Sigmoid colon (tissue), 7 donors: ENCODE measurements at regions of chr13 and their contacts with region 1.

Region 1: DNA sequence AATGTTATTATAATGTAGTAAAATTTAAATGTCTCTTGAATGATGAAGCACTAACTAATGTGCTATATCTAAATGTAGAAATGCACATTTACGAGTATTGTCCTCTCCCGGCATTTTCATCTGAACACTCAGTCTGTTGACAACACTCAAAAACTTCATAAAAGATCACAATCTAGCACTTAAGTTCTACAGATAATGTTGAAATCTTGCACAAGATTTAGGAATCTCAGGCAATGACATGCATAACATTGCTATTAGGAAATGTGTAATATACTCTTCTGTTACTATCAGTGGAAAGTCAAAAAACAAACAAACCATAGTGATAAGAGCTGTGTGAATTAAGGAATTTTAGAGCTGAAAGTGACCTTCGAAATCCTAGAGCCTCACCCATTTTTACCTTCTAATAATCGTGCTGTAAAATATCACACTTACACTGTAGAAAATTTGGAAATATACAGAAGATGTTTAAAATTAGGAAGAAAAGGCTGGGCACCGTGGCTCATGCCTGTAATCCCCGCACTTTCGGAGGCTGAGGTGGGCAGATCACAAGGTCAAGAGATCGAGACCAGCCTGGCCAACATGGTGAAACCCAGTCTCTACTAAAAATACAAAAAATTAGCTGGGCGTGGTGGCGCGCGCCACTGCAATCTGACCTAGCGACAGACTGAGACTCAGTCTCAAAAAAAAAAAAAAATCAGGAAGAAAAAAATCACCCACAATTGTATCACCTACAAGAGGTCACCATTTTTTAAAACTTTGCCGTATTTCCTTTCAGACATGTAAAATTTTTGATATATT is 37.7 kb upstream of the XPO4 start:
- DNase-seq: no peak
- H3K4me3 ChIP-seq: no peak overlapping the region
- H3K27ac ChIP-seq: peak overlapping the region in 1 of 4 donors; percentile 55
- H3K4me1 ChIP-seq: peaks cover 0 to 21% (median 14%) of the 10 kb centered on the region in 4 donors
- H3K27me3 ChIP-seq: no peaks in the 10 kb centered on the region
- CTCF ChIP-seq: no peak
- EP300 ChIP-seq: no peak
- POLR2A ChIP-seq: no peak

Region 2: DNA sequence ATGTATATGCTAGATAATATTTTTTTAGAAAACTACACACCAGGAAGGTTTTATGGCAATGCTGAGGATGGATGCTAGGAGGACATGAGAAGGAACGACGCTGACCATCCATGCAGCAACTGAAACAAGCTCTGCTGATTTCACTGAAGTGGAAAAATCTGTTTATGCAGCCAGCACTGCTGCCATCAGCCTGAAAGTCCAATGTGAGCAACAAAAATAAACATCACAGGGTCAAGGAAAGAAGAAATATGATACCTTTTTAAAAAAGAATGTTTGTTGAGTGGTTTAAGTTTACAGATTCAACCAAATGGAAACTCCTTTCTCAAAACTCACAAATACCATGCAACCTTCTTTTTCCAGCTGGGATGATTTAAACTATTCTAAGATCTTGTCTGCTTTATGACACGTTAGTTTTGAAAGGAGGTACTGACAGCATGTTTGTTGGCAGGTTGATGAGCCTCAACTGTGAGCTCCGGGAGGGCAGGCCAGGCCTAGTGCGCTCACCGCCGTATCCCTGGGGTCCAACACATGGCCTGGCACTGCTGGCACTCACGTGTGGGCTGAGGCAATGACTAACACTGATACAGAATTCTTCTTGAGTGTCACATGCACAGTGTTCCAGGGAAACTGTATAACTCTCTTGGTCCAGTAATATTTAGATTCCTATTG is 74.4 kb after region 1 on chr13:
- intact Hi-C with region 1: loop called (anchors 5 kb)
- DNase-seq: peak; percentile 78
- H3K4me3 ChIP-seq: no peak overlapping the region
- H3K27ac ChIP-seq: peak overlapping the region; percentile 53 to 77 (median 69)
- H3K4me1 ChIP-seq: peaks cover 0 to 89% (median 85%) of the 10 kb centered on the region in 4 donors
- H3K27me3 ChIP-seq: no peaks in the 10 kb centered on the region
- CTCF ChIP-seq: no peak
- EP300 ChIP-seq: peak in 1 of 4 donors; percentile 59
- POLR2A ChIP-seq: no peak

Region 3: GRCh38 chr13:21060987-21061763 is 120.9 kb after region 1 on chr13 and contains the start of gene LATS2:
- intact Hi-C with region 1: loop called (anchors 1 kb)
- DNase-seq: peak; percentile 99
- H3K4me3 ChIP-seq: peak within 1 kb of the TSS; percentile 86 to 96 (median 89)
- H3K27ac ChIP-seq: peak within 1 kb of the TSS; percentile 98 to 100 (median 99)
- H3K4me1 ChIP-seq: peaks cover 0 to 44% (median 39%) of the 10 kb centered on the region in 4 donors
- H3K27me3 ChIP-seq: no peaks in the 10 kb centered on the region
- CTCF ChIP-seq: peak in 1 of 4 experiments; percentile 33
- EP300 ChIP-seq: peak in 3 of 4 donors; percentile 8 to 69 (median 65)
- POLR2A ChIP-seq: peak; percentile 20 to 89
- total RNA-seq, gene LATS2: 21.8 to 45.5 (median 28.2) TPM

Region 4: DNA sequence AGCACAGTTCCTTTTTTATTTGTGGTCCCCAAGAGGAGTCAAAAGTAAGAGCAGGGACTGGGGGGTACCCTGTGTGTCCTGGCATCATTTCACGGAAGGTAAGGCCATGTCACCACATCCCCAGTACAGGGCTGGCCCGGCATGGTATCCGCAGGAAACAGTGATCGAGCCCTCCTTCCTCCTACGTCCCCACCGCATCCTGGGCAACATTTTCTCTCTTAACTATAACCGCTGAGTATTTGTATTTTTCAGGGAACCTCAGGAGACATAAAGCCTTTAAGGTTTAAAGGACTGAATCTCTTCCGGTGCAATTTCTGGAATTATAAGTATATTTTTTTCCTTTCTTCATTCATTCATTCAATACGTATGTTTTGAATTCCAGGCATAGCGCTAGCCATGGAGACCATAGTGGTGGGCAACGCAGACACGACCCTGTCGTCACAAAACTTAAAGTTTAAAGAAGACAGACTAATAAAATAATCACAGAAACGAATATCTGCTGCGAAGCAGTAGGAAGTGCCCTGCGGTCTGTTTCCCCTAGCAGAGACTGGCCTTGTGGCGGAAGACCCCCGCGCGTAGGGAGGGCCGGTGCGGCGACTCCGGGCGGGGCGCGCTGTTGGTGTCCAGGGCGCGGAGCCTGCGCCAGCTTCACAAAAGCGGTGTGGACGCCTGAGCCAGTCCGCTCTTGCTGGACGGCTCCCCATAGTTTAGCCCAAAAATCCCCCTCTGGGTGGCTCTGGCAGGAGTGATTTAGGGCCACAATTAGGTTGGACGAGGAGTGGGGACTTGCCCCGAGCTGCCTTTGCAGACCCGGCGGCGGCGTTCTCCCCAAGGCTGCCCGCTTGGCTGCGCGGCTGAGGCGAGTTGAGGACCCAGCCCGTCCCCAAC is 135.0 kb after region 1 on chr13:
- intact Hi-C with region 1: loop called (anchors 5 kb)
- DNase-seq: peak; percentile 73
- H3K4me3 ChIP-seq: peak overlapping the region; percentile 42 to 66 (median 52)
- H3K27ac ChIP-seq: peak overlapping the region; percentile 61 to 71 (median 64)
- H3K4me1 ChIP-seq: peaks cover 0 to 32% (median 10%) of the 10 kb centered on the region in 4 donors
- H3K27me3 ChIP-seq: no peaks in the 10 kb centered on the region
- CTCF ChIP-seq: no peak
- EP300 ChIP-seq: no peak
- POLR2A ChIP-seq: no peak

Region 5: DNA sequence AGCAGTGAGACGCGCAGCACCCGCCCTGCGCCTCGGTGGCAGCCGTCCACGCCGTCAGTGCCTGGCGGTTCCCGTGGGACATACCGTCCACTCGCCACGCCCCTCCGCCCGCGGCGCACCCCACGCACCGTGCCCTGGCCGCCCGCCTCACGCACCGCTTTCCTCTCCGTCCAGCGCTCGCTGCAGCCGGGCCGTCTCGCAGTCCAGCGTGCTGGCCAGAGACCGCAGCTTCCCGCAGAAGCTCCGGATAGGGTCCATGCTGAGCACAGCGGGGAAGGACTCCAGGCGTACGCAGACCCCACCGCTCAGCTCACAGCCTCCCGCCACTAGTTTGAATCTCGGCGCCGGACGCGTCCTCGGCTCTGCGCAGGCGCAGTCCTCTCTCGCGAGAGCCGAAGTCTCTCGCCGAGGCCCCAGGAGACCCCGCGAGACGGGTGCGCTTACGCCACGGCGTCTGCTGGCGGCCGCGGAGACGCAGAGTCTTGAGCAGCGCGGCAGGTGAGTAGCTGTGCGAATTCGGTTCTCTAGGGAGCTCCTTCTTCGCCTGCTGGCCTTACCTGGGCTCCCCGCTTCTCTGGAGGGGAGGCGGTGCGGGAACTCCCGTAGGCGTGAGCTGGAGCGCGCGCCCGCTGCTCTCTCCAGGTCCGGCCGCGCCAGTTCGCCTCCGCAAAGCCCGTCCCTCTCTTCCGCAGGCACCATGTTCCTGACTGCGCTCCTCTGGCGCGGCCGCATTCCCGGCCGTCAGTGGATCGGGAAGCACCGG is 236.1 kb after region 1 on chr13 and contains the starts of genes MRPL57 and SKA3:
- intact Hi-C with region 1: loop called (anchors 2 kb)
- DNase-seq: peak; percentile 96
- H3K4me3 ChIP-seq: peak within 1 kb of the TSS; percentile 69 to 95 (median 82)
- H3K27ac ChIP-seq: peak within 1 kb of the TSS; percentile 91 to 99 (median 94)
- H3K4me1 ChIP-seq: peaks cover 0 to 25% (median 19%) of the 10 kb centered on the region in 4 donors
- H3K27me3 ChIP-seq: no peaks in the 10 kb centered on the region
- CTCF ChIP-seq: peak in 3 of 4 experiments; percentile 17 to 37 (median 26)
- EP300 ChIP-seq: no peak
- POLR2A ChIP-seq: peak; percentile 88
- total RNA-seq, gene MRPL57: 25.8 to 51.0 (median 40.2) TPM
- total RNA-seq, gene SKA3: 0.33 to 0.95 (median 0.55) TPM in 3 of 4 donors, not detected in the other

Region 6: GRCh38 chr13:21297914-21298831 is 357.9 kb after region 1 on chr13:
- intact Hi-C with region 1: loop called (anchors 2 kb)
- DNase-seq: peak; percentile 90
- H3K4me3 ChIP-seq: peak overlapping the region; percentile 73 to 99 (median 90)
- H3K27ac ChIP-seq: peak overlapping the region; percentile 72 to 81 (median 80)
- H3K4me1 ChIP-seq: peaks cover 0 to 25% (median 15%) of the 10 kb centered on the region in 4 donors
- H3K27me3 ChIP-seq: no peaks in the 10 kb centered on the region
- CTCF ChIP-seq: peak; percentile 77 to 85 (median 82)
- EP300 ChIP-seq: no peak
- POLR2A ChIP-seq: peak in 1 of 2 donors; percentile 26

Region 7: DNA sequence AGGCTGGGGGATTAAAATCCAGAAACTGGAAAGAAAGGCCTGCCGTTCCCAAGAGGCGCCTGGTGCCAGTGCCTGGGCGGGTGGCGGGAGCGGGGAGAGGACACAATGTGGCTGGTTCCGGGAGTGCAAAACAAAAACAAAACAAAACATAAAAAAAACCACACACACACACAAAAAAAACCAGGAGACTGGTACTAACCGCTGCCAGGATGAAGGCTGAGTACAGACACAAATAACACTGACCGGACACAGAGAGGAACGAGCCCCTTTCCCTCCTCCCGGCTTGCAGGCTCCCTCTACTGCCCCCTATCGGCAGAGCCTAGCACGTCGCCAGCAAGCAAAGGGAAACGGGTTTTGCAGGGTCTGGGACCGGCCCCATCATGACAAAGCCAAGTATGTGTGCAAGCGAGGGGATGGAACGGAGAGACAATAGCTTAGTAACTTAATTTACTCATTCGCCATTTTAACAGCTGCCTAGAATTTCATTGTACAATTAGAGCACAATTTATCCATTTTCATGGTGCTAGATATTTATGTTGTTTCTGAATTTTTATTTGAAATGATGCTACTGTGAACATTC is 536.7 kb after region 1 on chr13:
- intact Hi-C with region 1: loop called (anchors 5 kb)
- DNase-seq: peak; percentile 87
- H3K4me3 ChIP-seq: peak overlapping the region; percentile 27 to 45 (median 36)
- H3K27ac ChIP-seq: peak overlapping the region in 3 of 4 donors; percentile 35 to 53 (median 48)
- H3K4me1 ChIP-seq: peaks cover 0 to 21% (median 14%) of the 10 kb centered on the region in 4 donors
- H3K27me3 ChIP-seq: no peaks in the 10 kb centered on the region
- CTCF ChIP-seq: peak; percentile 75 to 93 (median 85)
- EP300 ChIP-seq: no peak
- POLR2A ChIP-seq: no peak